Endothelial cell of umbilical vein (primary cell): ENCODE measurements at regions of chr1 and their contacts with region 1.

Region 1: GRCh38 chr1:212070720-212071302 is 35.3 kb downstream of the DTL start:
- DNase-seq: peak; percentile 72
- H3K4me3 ChIP-seq: no peak overlapping the region
- H3K27ac ChIP-seq: no peak overlapping the region
- H3K4me1 ChIP-seq: peaks cover 23% of the 10 kb centered on the region
- H3K27me3 ChIP-seq: no peaks in the 10 kb centered on the region
- CTCF ChIP-seq: peak; percentile 48 to 49
- POLR2A ChIP-seq: no peak

Region 2: GRCh38 chr1:212089560-212090163 is 18.9 kb after region 1 on chr1:
- CTCF ChIA-PET with region 1: interaction called, 31 read pairs
- POLR2A ChIA-PET with region 1: no interaction called
- dilution Hi-C with region 1: no loop called
- intact Hi-C with region 1: no loop called
- DNase-seq: no peak
- H3K4me3 ChIP-seq: no peak overlapping the region
- H3K27ac ChIP-seq: no peak overlapping the region
- H3K4me1 ChIP-seq: peaks cover 7% of the 10 kb centered on the region
- H3K27me3 ChIP-seq: no peaks in the 10 kb centered on the region
- CTCF ChIP-seq: no peak
- POLR2A ChIP-seq: no peak

Region 3: GRCh38 chr1:212162635-212163034 is 91.8 kb after region 1 on chr1:
- CTCF ChIA-PET with region 1: interaction called, 17 read pairs
- POLR2A ChIA-PET with region 1: interaction called, 4 read pairs
- dilution Hi-C with region 1: no loop called
- intact Hi-C with region 1: loop called (anchors 1 kb)
- DNase-seq: peak; percentile 57
- H3K4me3 ChIP-seq: no peak overlapping the region
- H3K27ac ChIP-seq: no peak overlapping the region
- H3K4me1 ChIP-seq: peaks cover 29% of the 10 kb centered on the region
- H3K27me3 ChIP-seq: no peaks in the 10 kb centered on the region
- CTCF ChIP-seq: no peak
- POLR2A ChIP-seq: no peak

Region 4: DNA sequence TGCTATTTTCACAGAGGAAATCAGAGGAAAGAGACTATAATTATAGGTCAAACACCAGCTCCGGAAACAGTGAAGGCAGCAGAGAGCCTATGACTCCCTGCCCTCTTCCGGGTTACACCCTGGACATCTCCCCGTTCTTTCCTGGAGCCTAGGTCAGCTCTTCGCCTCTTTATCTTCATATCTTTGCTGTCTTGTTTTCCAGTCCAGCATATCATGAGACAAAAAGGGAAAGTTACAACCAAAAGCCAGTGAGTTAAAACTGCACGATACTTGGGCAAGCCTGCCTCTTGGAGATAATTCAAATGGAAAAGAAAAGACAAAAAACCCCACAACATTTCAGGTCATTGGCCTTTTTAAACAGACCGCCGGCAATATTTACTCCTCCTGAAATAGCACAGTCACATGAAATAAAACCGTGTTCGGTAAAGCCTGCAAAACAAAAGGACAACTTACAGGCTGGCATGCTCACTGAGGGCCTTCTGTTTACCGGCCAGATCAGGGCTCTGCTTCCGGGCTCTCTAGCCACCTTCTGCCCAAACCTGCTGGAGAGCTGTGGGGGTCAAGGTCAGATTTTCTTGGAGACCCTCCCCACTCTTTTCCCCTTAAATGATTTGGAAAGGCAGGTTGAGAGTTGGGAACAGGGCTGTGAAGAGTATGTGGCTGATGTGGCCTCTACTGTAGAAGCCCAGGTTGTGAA is 171.6 kb after region 1 on chr1:
- CTCF ChIA-PET with region 1: interaction called, 11 read pairs
- POLR2A ChIA-PET with region 1: no interaction called
- dilution Hi-C with region 1: no loop called
- intact Hi-C with region 1: no loop called
- DNase-seq: peak; percentile 59
- H3K4me3 ChIP-seq: peak overlapping the region in 1 of 3 experiments; percentile 26
- H3K27ac ChIP-seq: peak overlapping the region; percentile 56
- H3K4me1 ChIP-seq: peaks cover 23% of the 10 kb centered on the region
- H3K27me3 ChIP-seq: no peaks in the 10 kb centered on the region
- CTCF ChIP-seq: no peak
- POLR2A ChIP-seq: no peak

Region 5: GRCh38 chr1:212315907-212316306 is 245.1 kb after region 1 on chr1:
- CTCF ChIA-PET with region 1: interaction called, 30 read pairs
- POLR2A ChIA-PET with region 1: no interaction called
- dilution Hi-C with region 1: no loop called
- intact Hi-C with region 1: loop called (anchors 1 kb)
- DNase-seq: peak; percentile 40
- H3K4me3 ChIP-seq: no peak overlapping the region
- H3K27ac ChIP-seq: no peak overlapping the region
- H3K4me1 ChIP-seq: no peaks in the 10 kb centered on the region
- H3K27me3 ChIP-seq: no peaks in the 10 kb centered on the region
- CTCF ChIP-seq: peak in 1 of 2 donors; percentile 1
- POLR2A ChIP-seq: no peak

Region 6: DNA sequence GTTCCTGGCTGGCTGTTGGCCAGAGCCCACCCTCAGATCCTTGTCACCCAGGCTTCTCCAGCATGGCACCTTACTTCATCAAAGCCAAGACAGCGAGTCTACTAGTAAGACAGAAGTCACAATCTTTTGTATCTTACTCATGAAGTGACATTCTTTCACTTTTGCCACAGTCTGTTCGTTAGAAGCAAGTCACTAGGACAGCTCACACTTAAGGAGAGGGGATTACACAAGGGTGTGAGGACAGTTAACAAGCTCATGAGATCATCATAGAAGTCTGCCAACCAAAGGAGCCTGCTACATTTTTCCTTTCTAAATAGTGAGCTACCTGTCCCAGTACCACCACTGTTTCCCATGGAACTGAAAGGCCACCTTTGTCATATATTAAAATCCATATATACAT is 282.4 kb after region 1 on chr1:
- CTCF ChIA-PET with region 1: interaction called, 36 read pairs
- POLR2A ChIA-PET with region 1: no interaction called
- dilution Hi-C with region 1: no loop called
- intact Hi-C with region 1: no loop called
- DNase-seq: no peak
- H3K4me3 ChIP-seq: no peak overlapping the region
- H3K27ac ChIP-seq: no peak overlapping the region
- H3K4me1 ChIP-seq: no peaks in the 10 kb centered on the region
- H3K27me3 ChIP-seq: no peaks in the 10 kb centered on the region
- CTCF ChIP-seq: no peak
- POLR2A ChIP-seq: no peak

Region 7: GRCh38 chr1:212608209-212608955 is 537.6 kb after region 1 on chr1 and contains the start of gene ATF3:
- CTCF ChIA-PET with region 1: no interaction called
- POLR2A ChIA-PET with region 1: no interaction called
- dilution Hi-C with region 1: no loop called
- intact Hi-C with region 1: no loop called
- DNase-seq: peak; percentile 98
- H3K4me3 ChIP-seq: peak within 1 kb of the TSS; percentile 51 to 77 (median 52)
- H3K27ac ChIP-seq: peak within 1 kb of the TSS; percentile 76
- H3K4me1 ChIP-seq: peaks cover 27% of the 10 kb centered on the region
- H3K27me3 ChIP-seq: peaks cover 38 to 44% of the 10 kb centered on the region in 2 experiments
- CTCF ChIP-seq: no peak
- POLR2A ChIP-seq: peak; percentile 98
- total RNA-seq, gene ATF3: 6.1 and 10.7 TPM in 2 replicates